Panc1 (cell line): ENCODE measurements at regions of chr2 and their contacts with region 1.

Region 1: GRCh38 chr2:225399504-225399903 is at the start of gene NYAP2:
- DNase-seq: no peak
- ATAC-seq: no peak
- H3K4me3 ChIP-seq: no peak within 1 kb of the TSS
- H3K27ac ChIP-seq: no peak within 1 kb of the TSS
- H3K4me1 ChIP-seq: no peaks in the 10 kb centered on the region
- H3K27me3 ChIP-seq: no peaks in the 10 kb centered on the region
- CTCF ChIP-seq: no peak
- total RNA-seq, gene NYAP2: not detected

Region 2: DNA sequence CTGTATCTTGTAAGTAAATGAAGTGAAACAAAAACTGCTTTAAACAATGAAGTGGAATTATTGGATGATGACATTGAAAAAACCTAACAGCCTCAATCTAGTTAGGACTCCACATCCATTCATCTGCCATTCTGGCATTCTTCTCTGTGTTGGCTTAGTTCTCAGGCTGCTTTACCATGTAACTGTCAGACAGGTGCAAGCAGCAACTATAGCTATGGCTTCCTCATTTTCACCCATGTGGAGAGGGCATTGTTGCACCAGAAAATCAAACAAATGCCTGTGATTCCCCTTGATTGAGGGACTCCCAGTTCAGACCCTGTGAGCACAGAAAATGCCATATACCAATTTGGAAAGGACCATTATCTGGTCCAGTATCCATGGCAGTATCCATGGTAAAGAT is 129.5 kb before region 1 on chr2:
- CTCF ChIA-PET with region 1: no interaction called
- POLR2A ChIA-PET with region 1: no interaction called
- in situ Hi-C with region 1: no loop called
- intact Hi-C with region 1: no loop called
- DNase-seq: no peak
- ATAC-seq: no peak
- H3K4me3 ChIP-seq: no peak overlapping the region
- H3K27ac ChIP-seq: no peak overlapping the region
- H3K4me1 ChIP-seq: no peaks in the 10 kb centered on the region
- H3K27me3 ChIP-seq: no peaks in the 10 kb centered on the region
- CTCF ChIP-seq: no peak

Region 3: GRCh38 chr2:225452677-225453076 is 53.2 kb after region 1 on chr2:
- CTCF ChIA-PET with region 1: no interaction called
- POLR2A ChIA-PET with region 1: no interaction called
- in situ Hi-C with region 1: no loop called
- intact Hi-C with region 1: no loop called
- DNase-seq: no peak
- ATAC-seq: no peak
- H3K4me3 ChIP-seq: no peak overlapping the region
- H3K27ac ChIP-seq: no peak overlapping the region
- H3K4me1 ChIP-seq: no peaks in the 10 kb centered on the region
- H3K27me3 ChIP-seq: no peaks in the 10 kb centered on the region
- CTCF ChIP-seq: no peak

Region 4: GRCh38 chr2:225615527-225615926 is 216.0 kb after region 1 on chr2:
- CTCF ChIA-PET with region 1: no interaction called
- POLR2A ChIA-PET with region 1: interaction called, 17 read pairs
- in situ Hi-C with region 1: no loop called
- intact Hi-C with region 1: no loop called
- DNase-seq: no peak
- ATAC-seq: no peak
- H3K4me3 ChIP-seq: no peak overlapping the region
- H3K27ac ChIP-seq: no peak overlapping the region
- H3K4me1 ChIP-seq: no peaks in the 10 kb centered on the region
- H3K27me3 ChIP-seq: no peaks in the 10 kb centered on the region
- CTCF ChIP-seq: no peak